PC-9 (cell line): ENCODE measurements at regions of chr2 and their contacts with region 1.

Region 1: GRCh38 chr2:58163913-58164312 is 77.2 kb downstream of the FANCL start:
- DNase-seq: no peak
- H3K4me3 ChIP-seq: no peak overlapping the region
- H3K27ac ChIP-seq: no peak overlapping the region
- H3K4me1 ChIP-seq: no peaks in the 10 kb centered on the region
- H3K27me3 ChIP-seq: no peaks in the 10 kb centered on the region
- CTCF ChIP-seq: no peak

Region 2: DNA sequence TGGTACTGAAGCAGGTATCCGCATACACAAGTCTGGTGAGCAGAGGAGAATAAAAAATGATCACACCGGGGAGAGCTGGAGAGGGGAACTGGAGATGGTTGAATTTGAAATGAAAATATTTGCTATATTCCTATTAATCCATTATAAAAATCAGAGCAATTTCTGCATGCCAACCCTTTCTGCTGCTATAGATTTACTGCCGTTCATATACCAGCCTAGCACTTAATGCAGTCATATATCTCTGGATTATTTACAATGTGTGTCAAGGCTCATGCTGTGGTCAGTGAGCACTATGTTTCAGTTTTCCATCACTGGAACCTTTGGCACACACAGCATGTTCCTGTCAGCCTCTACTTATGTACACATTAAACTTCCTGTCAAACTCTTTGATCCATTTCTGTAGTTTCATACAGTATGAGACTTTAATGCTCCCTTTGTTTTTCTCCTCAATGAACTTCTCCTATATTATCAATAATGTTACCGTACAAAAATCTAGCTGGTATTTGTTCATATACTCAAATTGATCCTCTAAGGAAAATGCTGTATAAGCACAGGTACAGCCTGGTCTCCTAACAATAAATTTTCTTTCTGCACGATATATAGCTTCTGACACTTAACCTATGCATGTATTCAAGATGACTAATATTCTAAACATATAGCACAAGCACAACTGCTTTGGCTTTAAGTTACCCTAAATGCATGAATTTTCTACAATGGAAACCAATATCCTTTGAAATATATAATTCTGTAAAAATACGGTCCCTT is 40.5 kb after region 1 on chr2:
- CTCF ChIA-PET with region 1: no interaction called
- POLR2A ChIA-PET with region 1: no interaction called
- intact Hi-C with region 1: loop called (anchors 5 kb)
- DNase-seq: no peak
- H3K4me3 ChIP-seq: no peak overlapping the region
- H3K27ac ChIP-seq: no peak overlapping the region
- H3K4me1 ChIP-seq: no peaks in the 10 kb centered on the region
- H3K27me3 ChIP-seq: no peaks in the 10 kb centered on the region
- CTCF ChIP-seq: no peak